Heart left ventricle (tissue), 16 donors: ENCODE measurements at regions of chr1 and their contacts with region 1.

Region 1: DNA sequence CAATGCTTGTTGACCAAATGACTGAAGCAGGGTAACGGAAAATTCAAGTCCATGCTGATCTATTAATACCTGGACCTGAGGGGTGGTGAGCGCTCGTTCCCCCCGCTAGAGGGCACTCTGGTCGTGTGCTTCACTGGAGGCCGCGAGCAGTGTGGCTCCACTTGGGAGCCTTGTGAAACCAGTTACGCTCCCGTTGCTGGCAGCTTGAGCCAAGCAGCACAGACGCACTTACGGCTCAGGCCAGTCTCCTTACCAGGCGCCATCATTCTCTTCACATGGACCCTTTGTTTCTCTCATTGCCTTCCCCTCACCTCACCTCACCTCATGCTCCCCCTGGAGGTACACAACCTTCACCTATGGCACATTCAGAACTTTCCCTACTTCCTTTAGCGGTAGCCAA is 49.7 kb upstream of the TSPAN2 start:
- DNase-seq: peak; percentile 84 to 94 (median 89)
- ATAC-seq: peak; percentile 89 to 96 (median 92)
- H3K4me3 ChIP-seq: no peak overlapping the region
- H3K27ac ChIP-seq: peak overlapping the region in 6 of 12 donors; percentile 18 to 60 (median 30)
- H3K4me1 ChIP-seq: peaks cover 0 to 38% (median 13%) of the 10 kb centered on the region in 12 donors
- H3K27me3 ChIP-seq: no peaks in the 10 kb centered on the region
- CTCF ChIP-seq: peak; percentile 81 to 93 (median 88)
- POLR2A ChIP-seq: no peak

Region 2: DNA sequence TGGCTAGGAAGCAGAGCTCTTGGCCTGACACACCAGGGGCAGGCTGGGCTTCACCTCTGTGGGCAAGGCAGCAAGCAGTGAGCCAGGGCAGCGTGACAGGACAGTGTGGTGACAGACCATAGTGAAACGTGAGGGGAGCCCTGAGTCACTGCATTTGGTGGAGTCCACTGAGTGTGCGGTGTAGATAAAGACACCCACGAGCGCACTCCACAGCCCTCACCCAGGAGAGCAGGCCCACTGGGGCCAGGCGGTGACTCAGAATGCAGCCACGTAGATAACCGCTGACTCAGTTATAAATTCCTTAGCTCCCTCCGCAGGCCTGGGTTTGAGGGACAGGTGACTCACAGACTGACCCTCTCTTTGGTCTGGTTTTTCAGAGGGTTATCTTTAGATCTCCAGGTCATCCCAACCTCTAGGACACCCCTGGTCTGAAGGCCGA is 40.4 kb after region 1 on chr1:
- intact Hi-C with region 1: loop called in 2 of 10 experiments (anchors 5 kb)
- DNase-seq: peak in 4 of 5 donors; percentile 46 to 85 (median 84)
- ATAC-seq: peak; percentile 72 to 87 (median 79)
- H3K4me3 ChIP-seq: no peak overlapping the region
- H3K27ac ChIP-seq: peak overlapping the region in 6 of 12 donors; percentile 22 to 69 (median 54)
- H3K4me1 ChIP-seq: peaks cover 0 to 25% (median 9%) of the 10 kb centered on the region in 12 donors
- H3K27me3 ChIP-seq: no peaks in the 10 kb centered on the region
- CTCF ChIP-seq: no peak
- POLR2A ChIP-seq: no peak

Region 3: DNA sequence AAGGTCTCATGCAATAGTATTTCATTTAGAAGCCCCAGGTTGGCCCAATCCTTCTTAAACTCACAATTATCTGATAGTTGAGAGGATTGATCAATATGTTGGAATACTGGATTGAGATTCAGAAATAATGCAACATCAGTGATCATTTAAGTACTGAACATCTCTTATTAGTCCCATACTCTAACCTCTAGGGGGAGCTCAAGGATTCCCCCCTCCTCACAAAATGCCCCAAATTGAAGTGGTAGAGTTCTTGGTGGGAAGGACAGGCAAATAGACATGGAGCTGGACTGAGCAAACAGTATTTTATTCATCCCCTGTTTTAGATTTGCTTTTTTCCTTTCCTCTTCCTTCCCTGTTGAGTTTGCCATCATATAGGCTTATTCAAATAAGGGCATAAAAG is 136.2 kb after region 1 on chr1:
- intact Hi-C with region 1: loop called in 3 of 10 experiments (anchors 5 to 10 kb)
- DNase-seq: no peak
- ATAC-seq: no peak
- H3K4me3 ChIP-seq: no peak overlapping the region
- H3K27ac ChIP-seq: peak overlapping the region in 5 of 12 donors; percentile 7 to 66 (median 28)
- H3K4me1 ChIP-seq: peaks cover 0 to 16% (median 0%) of the 10 kb centered on the region in 12 donors
- H3K27me3 ChIP-seq: no peaks in the 10 kb centered on the region
- CTCF ChIP-seq: peak in 11 of 12 donors; percentile 22 to 51 (median 33)
- POLR2A ChIP-seq: no peak

Region 4: DNA sequence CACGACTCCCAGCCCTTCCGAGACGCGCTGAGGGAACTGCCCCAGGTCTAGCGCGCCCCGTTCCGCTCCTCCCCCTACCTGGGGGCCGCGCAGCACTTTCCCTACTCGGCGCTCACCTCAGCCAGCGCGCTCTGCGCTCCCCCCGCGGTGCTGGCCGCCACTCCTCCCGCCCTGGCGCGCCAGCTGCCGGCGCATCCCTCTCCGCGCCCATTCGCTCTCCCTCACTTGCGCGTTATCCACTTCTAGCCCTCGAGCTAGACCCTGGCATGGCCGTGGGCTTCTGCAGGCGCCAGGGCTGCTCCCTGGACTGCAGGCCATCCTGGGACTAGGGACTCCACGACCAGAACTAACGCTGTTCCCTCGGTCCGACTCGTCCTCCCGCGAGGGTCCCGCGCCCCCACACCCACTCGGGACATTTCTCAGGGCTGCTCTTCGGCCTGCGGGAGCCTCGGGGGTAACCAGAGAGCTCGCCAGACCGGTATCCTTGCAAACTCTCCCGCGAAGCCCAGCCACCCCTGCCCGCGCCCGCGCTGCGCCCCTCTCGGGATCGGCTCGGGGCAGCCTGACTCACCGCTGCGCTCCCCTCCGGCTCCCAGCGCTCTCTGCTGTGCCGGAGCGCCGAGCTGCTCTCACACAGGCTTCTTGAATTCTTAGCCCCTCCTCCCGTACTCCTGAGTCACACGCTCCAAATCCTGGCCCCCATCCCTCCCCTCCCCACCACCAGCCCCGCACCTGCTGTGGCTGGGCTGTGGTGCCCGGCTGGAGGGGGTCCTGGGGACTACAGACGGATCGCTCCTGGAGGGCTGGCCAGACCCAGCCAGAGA is 198.9 kb after region 1 on chr1 and contains the start of gene NGF:
- intact Hi-C with region 1: loop called in 3 of 10 experiments (anchors 5 to 10 kb)
- DNase-seq: peak; percentile 44 to 82 (median 68)
- ATAC-seq: peak; percentile 65 to 91 (median 84)
- H3K4me3 ChIP-seq: peak within 1 kb of the TSS; percentile 57 to 91 (median 70)
- H3K27ac ChIP-seq: peak within 1 kb of the TSS; percentile 15 to 91 (median 80)
- H3K4me1 ChIP-seq: peaks cover 0 to 50% (median 22%) of the 10 kb centered on the region in 12 donors
- H3K27me3 ChIP-seq: peaks cover 0 to 32% (median 0%) of the 10 kb centered on the region in 9 donors
- CTCF ChIP-seq: peak in 1 of 12 donors; percentile 12
- POLR2A ChIP-seq: peak; percentile 27 to 77
- total RNA-seq, gene NGF: 0.94 to 13.6 (median 2.9) TPM

Region 5: DNA sequence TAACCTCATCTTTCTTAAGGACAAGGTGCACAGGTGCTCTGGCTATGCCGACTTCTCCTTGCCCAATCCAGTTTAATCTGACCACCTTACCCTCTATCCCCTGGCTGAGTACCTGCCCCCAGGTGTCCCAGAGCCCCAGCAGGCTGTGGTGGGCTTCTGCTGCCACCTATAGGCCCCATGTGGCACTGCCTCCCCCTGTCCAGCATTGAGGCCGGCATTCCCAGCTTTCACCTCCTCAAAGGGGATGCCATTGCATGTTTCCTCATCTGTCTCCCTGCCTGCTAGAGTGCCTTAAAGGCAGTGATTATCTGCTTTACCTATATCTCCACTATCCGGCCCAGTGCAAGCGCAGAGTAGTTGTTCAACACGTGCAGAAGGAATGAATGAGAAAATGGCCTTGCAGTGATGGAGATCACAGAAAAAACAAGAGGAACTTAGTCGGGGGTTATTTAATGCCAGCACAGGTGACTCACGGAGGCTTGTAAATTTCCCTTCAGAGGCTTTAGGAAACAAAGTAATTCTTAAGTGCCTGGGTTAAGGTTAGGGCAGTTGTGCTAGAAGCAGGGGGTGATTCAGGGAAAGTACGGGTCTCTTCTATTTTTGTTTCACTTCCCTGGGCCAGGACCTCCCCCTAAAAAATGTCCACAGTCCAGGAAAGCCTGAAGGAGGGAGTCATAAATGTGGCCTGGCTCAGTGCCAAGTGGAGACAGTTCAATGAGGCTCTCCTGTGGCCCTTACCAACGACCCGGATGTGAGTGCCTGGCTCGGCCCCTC is 330.9 kb after region 1 on chr1:
- intact Hi-C with region 1: loop called in 8 of 10 experiments (anchors 2 to 5 kb)
- DNase-seq: peak in 3 of 5 donors; percentile 32 to 68 (median 45)
- ATAC-seq: peak; percentile 60 to 74 (median 64)
- H3K4me3 ChIP-seq: no peak overlapping the region
- H3K27ac ChIP-seq: no peak overlapping the region
- H3K4me1 ChIP-seq: peaks cover 0 to 11% (median 0%) of the 10 kb centered on the region in 12 donors
- H3K27me3 ChIP-seq: no peaks in the 10 kb centered on the region
- CTCF ChIP-seq: peak; percentile 69 to 86 (median 80)
- POLR2A ChIP-seq: no peak

Region 6: GRCh38 chr1:115595279-115596079 is 456.5 kb after region 1 on chr1:
- intact Hi-C with region 1: loop called (anchors 2 to 5 kb)
- DNase-seq: peak; percentile 87 to 92 (median 90)
- ATAC-seq: peak; percentile 81 to 92 (median 89)
- H3K4me3 ChIP-seq: no peak overlapping the region
- H3K27ac ChIP-seq: no peak overlapping the region
- H3K4me1 ChIP-seq: peaks cover 0 to 31% (median 12%) of the 10 kb centered on the region in 12 donors
- H3K27me3 ChIP-seq: no peaks in the 10 kb centered on the region
- CTCF ChIP-seq: peak in 11 of 12 donors; percentile 89 to 98 (median 95)
- POLR2A ChIP-seq: no peak

Region 7: GRCh38 chr1:115771847-115772457 is 633.0 kb after region 1 on chr1:
- intact Hi-C with region 1: loop called in 2 of 10 experiments (anchors 10 kb)
- DNase-seq: peak in 4 of 5 donors; percentile 68 to 79 (median 74)
- ATAC-seq: peak; percentile 65 to 83 (median 74)
- H3K4me3 ChIP-seq: peak overlapping the region in 4 of 12 donors; percentile 4 to 39 (median 32)
- H3K27ac ChIP-seq: peak overlapping the region in 9 of 12 donors; percentile 47 to 90 (median 68)
- H3K4me1 ChIP-seq: peaks cover 0 to 27% (median 6%) of the 10 kb centered on the region in 12 donors
- H3K27me3 ChIP-seq: no peaks in the 10 kb centered on the region
- CTCF ChIP-seq: peak; percentile 54 to 83 (median 74)
- POLR2A ChIP-seq: no peak